ENCODE measurements at regions of chr22 and their contacts with region 1.

Region 1: DNA sequence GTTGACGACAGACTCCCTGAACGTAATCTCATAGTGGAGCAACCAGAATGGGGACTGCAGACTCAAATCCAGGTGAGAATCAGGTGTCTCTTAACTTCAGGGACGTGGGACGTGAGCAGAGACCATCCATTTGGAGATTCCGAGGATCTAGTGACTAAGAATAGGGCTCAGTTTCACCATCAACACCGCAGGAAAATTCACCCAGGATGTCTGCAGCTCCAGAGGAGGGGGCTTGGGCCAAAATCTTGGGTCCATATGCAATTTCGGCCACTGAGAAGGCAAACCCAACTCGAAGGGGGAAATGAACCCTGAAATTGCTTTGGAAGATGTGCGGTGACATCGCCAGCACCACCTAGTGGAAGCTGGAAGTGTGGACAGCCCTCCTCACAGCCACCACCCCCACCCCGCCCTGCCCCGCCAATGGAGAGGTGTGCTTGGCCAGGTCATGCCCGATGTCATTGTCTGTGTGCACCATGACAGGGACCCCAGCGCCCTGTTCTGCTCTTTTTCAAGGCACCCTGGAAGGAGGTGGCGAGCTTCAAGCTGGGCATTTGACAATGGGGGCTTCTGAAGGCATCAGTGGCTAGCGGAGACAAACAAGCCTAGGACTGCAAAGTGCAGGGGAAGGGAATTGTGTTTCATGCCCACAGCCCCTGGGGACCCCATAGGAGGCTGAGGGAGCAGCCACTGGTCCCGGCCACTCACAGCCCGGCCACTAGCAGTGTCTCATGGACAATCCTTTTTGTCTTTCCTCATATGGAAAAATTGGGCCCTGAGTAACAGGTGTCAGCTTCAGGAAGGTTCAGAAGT is 24.8 kb downstream of the APOL1 start:
- DNase-seq: peak; percentile 66
- H3K4me3 Mint-ChIP-seq: no peak overlapping the region
- H3K27ac Mint-ChIP-seq: peak overlapping the region; percentile 19
- H3K4me1 Mint-ChIP-seq: peaks cover 6% of the 10 kb centered on the region
- H3K27me3 Mint-ChIP-seq: no peaks in the 10 kb centered on the region
- CTCF ChIP-seq: peak; percentile 68

Region 2: GRCh38 chr22:36194971-36195370 is 82.7 kb before region 1 on chr22:
- CTCF ChIA-PET with region 1: no interaction called
- POLR2A ChIA-PET with region 1: interaction called, 4 read pairs
- intact Hi-C with region 1: loop called (anchors 5 kb)
- DNase-seq: peak; percentile 45
- H3K4me3 Mint-ChIP-seq: no peak overlapping the region
- H3K27ac Mint-ChIP-seq: no peak overlapping the region
- H3K4me1 Mint-ChIP-seq: no peaks in the 10 kb centered on the region
- H3K27me3 Mint-ChIP-seq: peaks cover 46% of the 10 kb centered on the region
- CTCF ChIP-seq: peak; percentile 69

Measured in MCF 10A (cell line).